Psoas muscle (tissue), 8 donors: ENCODE measurements at regions of chr4 and their contacts with region 1.

Region 1: DNA sequence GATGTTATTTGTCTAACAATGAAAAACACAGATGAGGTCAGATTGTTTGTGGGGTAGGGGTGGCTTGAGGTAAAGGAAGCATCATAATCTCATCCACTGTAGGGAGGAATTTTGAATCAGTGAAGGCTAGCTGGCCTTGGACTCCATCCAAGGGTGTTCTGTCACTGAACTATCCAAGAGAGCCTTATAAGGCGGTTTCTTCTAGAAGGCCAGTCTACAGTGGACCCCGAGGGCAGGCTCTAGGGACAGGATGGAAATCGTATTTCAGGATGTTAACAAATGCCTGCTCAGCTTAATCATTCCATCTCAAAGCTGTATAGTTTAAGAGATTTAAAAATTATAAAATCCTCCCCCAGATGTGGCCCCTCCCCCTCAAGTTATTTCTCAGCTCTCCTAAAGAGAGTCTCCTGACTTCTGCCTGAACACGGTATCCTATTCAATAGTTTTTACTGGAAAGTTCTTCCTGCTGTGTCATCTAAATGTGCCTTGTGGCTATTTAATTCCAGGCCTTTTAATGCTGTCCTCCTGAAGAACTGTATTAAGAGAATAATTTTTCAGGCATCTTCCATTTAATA is 8.0 kb downstream of the IGFBP7 start:
- DNase-seq: peak; percentile 31 to 67
- ATAC-seq: peak; percentile 56 to 82 (median 78)
- H3K4me3 ChIP-seq: no peak overlapping the region
- H3K27ac ChIP-seq: peak overlapping the region; percentile 75
- H3K4me1 ChIP-seq: peaks cover 4% of the 10 kb centered on the region
- H3K27me3 ChIP-seq: no peaks in the 10 kb centered on the region
- CTCF ChIP-seq: no peak

Region 2: DNA sequence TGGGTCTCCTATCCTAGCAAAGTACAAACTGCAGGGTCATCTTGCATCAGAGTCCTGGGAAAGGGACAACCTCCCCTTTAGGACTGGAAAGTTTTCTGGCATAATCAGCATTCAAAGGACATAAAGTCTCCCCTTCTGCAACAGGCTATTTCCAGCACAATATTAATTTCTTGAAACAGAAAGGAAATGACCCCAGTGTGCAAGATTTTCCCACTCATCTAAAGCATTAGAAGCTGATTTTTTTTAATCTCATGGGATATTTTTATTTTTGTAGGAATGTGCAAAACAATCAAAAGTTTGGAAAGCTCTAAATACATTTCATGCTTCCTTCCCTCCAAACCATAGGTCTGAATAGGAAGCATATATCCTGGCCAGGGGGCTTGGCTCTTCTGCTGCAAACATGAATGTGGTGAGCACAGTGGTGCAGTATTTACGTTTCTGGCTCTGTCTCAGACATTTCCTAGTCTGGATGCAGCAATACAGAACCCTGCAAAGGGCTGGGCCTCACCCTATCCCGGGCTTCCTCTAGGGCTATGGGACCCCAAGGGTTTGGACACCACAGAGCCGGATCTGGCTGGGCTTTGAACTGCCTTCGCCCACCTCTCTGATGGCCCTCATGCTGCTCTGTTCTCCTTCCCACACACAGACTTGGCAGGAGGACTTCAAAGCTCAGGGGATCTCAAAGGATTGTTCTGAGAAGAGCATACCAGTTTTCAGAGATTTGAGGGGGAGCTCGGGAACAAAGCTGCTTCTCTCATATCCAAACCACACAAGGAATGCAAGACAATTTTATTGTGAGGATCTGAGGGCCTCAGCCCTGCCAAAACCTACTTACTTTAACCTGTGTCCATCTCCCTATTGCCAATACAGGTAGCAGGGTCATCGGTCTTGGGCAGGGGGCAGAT is 58.5 kb before region 1 on chr4:
- intact Hi-C with region 1: loop called in 1 of 2 experiments (anchors 5 kb)
- DNase-seq: no peak
- ATAC-seq: peak; percentile 25 to 73 (median 62)
- H3K4me3 ChIP-seq: peak overlapping the region; percentile 22
- H3K27ac ChIP-seq: peak overlapping the region; percentile 66
- H3K4me1 ChIP-seq: no peaks in the 10 kb centered on the region
- H3K27me3 ChIP-seq: no peaks in the 10 kb centered on the region
- CTCF ChIP-seq: no peak

Region 3: GRCh38 chr4:57055886-57056285 is 46.3 kb before region 1 on chr4:
- intact Hi-C with region 1: no loop called
- DNase-seq: no peak
- ATAC-seq: no peak
- H3K4me3 ChIP-seq: no peak overlapping the region
- H3K27ac ChIP-seq: no peak overlapping the region
- H3K4me1 ChIP-seq: no peaks in the 10 kb centered on the region
- H3K27me3 ChIP-seq: no peaks in the 10 kb centered on the region
- CTCF ChIP-seq: no peak